H1 (cell line): ENCODE measurements at regions of chr11 and their contacts with region 1.

Region 1: DNA sequence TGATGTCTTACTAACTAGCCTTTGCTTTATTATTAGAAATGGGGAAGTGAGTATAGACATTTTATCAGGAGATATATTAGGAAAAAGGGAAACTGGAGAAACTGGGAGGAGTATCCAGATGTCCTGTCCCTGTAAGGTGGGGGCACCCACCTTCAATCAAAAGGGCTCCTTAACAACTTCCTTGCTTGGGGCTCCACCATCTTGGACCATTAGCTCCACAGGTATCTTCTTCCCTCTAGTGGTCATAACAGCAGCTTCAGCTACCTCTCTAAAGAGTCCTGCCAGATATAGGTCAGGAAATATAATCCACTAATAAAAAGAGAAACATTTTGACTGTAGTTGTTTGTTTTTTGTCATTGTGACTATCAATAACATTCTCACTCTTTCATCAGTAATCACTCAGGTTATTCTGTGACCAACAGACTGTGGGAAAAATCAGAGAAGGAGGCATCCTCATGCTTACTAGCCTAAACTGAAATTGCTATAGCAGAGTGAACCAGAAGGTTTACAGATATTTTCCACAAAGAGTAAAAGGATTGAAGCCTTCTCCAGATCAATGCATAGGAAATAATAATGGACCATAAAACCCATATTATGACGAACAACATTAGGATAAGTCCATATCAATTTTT is 10.4 kb downstream of the OR51B4 start:
- DNase-seq: no peak
- H3K4me3 ChIP-seq: no peak overlapping the region
- H3K27ac ChIP-seq: no peak overlapping the region
- H3K4me1 ChIP-seq: no peaks in the 10 kb centered on the region
- H3K27me3 ChIP-seq: no peaks in the 10 kb centered on the region
- CTCF ChIP-seq: peak in 2 of 3 experiments; percentile 64 to 69; a peak in 3 of 4 replicates
- EP300 ChIP-seq: no peak
- POLR2A ChIP-seq: no peak
- RAD21 ChIP-seq: peak; percentile 81 to 88

Region 2: GRCh38 chr11:5123802-5124521 is 167.4 kb before region 1 on chr11:
- CTCF ChIA-PET with region 1: interaction called, 24 read pairs
- POLR2A ChIA-PET with region 1: no interaction called
- DNase-seq: peak; percentile 44 to 86
- H3K4me3 ChIP-seq: no peak overlapping the region
- H3K27ac ChIP-seq: no peak overlapping the region
- H3K4me1 ChIP-seq: no peaks in the 10 kb centered on the region
- H3K27me3 ChIP-seq: no peaks in the 10 kb centered on the region
- CTCF ChIP-seq: peak; percentile 48 to 79 (median 77)
- EP300 ChIP-seq: no peak
- POLR2A ChIP-seq: no peak
- RAD21 ChIP-seq: peak; percentile 90 to 91

Region 3: GRCh38 chr11:5204787-5205186 is 86.5 kb before region 1 on chr11:
- CTCF ChIA-PET with region 1: interaction called, 36 read pairs
- POLR2A ChIA-PET with region 1: no interaction called
- DNase-seq: peak in 1 of 2 experiments; percentile 3
- H3K4me3 ChIP-seq: no peak overlapping the region
- H3K27ac ChIP-seq: no peak overlapping the region
- H3K4me1 ChIP-seq: no peaks in the 10 kb centered on the region
- H3K27me3 ChIP-seq: no peaks in the 10 kb centered on the region
- CTCF ChIP-seq: peak in 2 of 3 experiments; percentile 64; a peak in 3 of 4 replicates
- EP300 ChIP-seq: no peak
- POLR2A ChIP-seq: no peak
- RAD21 ChIP-seq: peak; percentile 88 to 91

Region 4: DNA sequence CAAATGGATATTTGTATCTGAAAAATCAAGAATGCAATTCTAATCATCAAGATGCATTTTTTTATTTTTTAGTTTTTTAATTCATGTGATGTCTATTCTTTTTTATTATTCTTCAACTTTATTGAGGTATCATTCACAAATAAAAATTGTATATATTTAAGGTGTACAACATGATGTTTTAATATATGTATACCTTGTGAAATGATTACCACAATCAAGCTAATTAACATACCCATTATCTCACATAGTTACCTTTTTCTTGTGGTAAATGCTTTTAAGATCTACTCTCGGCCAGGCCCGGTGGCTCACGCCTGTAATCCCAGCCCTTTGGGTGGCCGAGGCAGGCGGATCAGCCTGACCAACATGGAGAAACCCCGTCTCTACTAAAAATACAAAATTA is 68.2 kb before region 1 on chr11:
- CTCF ChIA-PET with region 1: no interaction called
- POLR2A ChIA-PET with region 1: no interaction called
- DNase-seq: no peak
- H3K4me3 ChIP-seq: no peak overlapping the region
- H3K27ac ChIP-seq: no peak overlapping the region
- H3K4me1 ChIP-seq: no peaks in the 10 kb centered on the region
- H3K27me3 ChIP-seq: no peaks in the 10 kb centered on the region
- CTCF ChIP-seq: no peak
- EP300 ChIP-seq: no peak
- POLR2A ChIP-seq: no peak
- RAD21 ChIP-seq: no peak

Region 5: DNA sequence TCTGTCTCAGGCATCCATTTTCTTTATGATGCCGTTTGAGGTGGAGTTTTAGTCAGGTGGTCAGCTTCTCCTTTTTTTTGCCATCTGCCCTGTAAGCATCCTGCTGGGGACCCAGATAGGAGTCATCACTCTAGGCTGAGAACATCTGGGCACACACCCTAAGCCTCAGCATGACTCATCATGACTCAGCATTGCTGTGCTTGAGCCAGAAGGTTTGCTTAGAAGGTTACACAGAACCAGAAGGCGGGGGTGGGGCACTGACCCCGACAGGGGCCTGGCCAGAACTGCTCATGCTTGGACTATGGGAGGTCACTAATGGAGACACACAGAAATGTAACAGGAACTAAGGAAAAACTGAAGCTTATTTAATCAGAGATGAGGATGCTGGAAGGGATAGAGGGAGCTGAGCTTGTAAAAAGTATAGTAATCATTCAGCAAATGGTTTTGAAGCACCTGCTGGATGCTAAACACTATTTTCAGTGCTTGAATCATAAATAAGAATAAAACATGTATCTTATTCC is 10.7 kb before region 1 on chr11:
- CTCF ChIA-PET with region 1: interaction called, 48 read pairs
- POLR2A ChIA-PET with region 1: no interaction called
- DNase-seq: no peak
- H3K4me3 ChIP-seq: no peak overlapping the region
- H3K27ac ChIP-seq: no peak overlapping the region
- H3K4me1 ChIP-seq: no peaks in the 10 kb centered on the region; a peak in 1 of 7 replicates
- H3K27me3 ChIP-seq: no peaks in the 10 kb centered on the region
- CTCF ChIP-seq: no peak
- EP300 ChIP-seq: no peak
- POLR2A ChIP-seq: no peak
- RAD21 ChIP-seq: no peak

Region 6: DNA sequence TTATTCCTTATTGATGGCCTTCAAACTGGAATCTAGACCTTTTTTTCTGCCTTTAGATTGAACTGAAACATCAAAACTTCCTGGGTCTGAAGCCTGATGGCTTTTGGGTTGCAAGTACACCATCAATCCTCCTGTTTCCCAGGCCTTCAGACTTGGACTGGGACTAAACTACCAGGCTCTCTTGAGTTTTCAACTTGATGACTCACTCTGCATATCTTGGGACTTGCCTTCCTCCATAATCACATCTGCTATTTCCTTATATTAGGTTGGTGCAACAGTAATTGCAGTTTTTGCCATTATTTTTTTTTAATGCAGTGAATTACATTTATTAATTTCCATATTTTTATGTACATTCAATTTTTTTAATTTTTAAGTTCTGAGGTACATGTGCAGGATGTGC is 45.0 kb after region 1 on chr11:
- CTCF ChIA-PET with region 1: no interaction called
- POLR2A ChIA-PET with region 1: no interaction called
- DNase-seq: no peak
- H3K4me3 ChIP-seq: no peak overlapping the region
- H3K27ac ChIP-seq: no peak overlapping the region
- H3K4me1 ChIP-seq: no peaks in the 10 kb centered on the region
- H3K27me3 ChIP-seq: no peaks in the 10 kb centered on the region
- CTCF ChIP-seq: no peak
- EP300 ChIP-seq: no peak
- POLR2A ChIP-seq: no peak
- RAD21 ChIP-seq: no peak